KBM-7 (cell line): ENCODE measurements at regions of chr11 and their contacts with region 1.

Region 1: DNA sequence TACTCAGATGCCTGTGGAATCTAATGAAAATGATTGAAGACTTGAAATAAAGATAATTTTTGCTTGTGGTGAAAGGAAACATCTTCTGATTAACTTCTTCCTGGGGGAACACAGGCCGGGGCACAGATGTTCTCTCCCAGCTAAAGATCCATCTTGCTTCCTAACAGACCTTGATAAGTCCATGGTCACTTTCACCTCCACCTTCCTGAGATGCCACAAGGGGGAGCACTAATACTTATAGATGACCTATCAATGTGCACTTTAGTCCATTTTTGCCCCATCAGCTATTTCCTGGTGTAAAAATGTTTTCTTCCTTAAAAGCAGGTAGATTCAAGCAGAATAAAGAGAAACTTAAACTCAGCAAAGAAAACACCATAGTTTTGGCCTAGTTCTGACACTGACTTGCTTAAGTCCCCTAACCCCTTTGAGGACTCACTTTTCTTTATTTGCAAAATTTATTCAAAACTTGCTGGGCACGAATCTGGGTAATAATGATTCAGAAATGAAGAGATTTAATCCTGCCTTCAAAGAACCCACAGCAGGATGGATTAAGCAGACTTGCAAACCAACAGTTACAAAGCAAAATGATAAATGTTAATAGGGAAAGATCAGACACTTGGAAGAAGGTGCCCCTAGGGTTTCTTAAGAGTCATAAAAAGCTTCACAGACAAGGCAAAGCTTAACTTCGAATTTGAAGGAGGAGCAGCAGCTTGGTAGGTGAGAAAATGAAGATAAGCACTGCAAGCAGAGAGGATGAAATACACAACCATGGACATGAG is 158.7 kb downstream of the RAB38 start:
- DNase-seq: peak; percentile 73

Region 2: DNA sequence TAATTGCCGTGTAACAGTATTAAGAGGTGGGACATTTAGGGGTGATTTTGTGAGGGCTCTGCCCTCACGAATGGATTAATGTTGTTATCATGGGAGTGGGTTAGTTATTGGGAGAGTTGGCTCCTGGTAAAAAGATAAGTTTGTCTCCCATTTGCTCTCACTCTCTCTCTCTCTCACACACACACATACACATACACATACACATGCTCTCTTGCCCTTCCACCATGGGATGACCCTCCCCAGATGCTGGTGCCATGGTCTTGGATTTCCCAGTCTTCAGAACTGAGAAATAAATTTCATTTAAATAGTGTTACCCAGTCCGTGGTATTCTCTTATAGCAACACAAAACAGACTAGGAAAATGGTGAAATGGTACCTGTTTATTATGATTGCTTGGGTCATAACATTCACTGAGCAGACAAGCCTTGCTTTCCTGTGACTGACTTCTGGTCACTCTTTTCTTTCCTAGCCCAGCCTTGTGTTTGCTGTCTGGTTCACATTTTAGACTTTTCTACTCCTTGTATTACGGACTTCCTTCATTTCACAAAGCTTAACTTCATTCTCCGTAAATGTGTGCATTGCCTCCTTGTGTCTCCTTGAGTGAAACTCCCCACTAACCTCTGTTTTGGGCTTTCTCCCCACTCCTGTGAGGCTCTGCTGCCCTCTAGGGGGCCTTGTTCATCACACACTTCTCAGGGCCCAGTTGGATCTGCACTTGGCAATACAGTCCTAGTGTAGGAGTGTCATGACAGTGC is 527.5 kb after region 1 on chr11:
- in situ Hi-C with region 1: loop called (anchors 25 kb)
- DNase-seq: peak; percentile 93